ENCODE measurements at regions of chr5 and their contacts with region 1.

Region 1: DNA sequence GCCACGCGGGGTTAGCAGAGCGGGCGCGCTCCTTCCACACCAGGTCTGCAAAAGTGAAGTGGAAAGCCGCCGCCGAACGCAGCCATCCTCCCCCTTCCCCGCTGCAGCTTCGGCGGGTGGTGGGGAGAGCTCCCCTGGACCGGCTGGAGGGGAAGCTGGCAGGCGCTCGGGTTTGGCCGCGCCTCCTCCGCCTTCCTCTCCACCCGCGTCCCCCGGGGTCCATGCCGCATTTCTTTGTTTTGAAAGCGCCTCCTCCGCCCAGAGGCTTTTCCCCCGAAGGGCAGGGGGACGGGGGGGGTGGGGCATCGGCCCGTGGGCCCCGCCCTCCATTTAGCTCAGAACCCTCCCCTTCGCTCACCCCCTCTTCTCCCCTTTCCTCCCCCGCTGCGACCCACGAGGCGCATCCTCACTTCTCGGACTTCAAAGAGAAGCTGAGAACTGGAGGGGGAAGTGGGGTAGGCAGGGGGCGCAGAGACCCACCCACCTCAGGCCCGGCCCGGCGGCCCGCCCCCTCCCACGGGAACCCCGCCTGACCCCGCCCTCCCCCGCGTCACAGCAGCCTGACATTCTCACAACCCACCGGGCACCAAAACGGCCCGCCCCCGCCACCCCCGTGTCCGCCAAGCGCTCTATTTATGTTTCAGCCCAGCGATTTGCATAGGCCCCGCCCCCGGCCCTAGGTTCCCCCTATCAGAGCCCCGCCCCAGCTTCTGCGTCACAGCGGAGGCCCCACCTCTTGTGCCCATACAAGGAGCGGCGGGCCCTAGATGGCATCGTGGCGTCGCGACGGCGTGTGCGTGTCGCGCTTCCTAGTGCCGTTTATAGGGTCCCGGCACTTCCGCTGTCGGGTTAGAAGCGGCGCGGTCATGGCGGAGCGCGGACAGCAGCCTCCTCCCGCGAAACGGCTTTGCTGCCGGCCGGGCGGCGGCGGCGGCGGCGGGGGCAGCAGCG is at the start of gene ZSWIM6:
- DNase-seq: peak; percentile 99
- H3K4me3 ChIP-seq: peak within 1 kb of the TSS; percentile 94 to 99 (median 98)
- H3K27ac ChIP-seq: peak within 1 kb of the TSS; percentile 94 to 99 (median 97)
- H3K4me1 ChIP-seq: peaks cover 19 to 55% (median 32%) of the 10 kb centered on the region in 3 donors
- H3K27me3 ChIP-seq: no peaks in the 10 kb centered on the region
- CTCF ChIP-seq: no peak
- POLR2A ChIP-seq: peak in 3 of 4 donors; percentile 91 to 97 (median 96)
- total RNA-seq, gene ZSWIM6: 6.4 to 12.4 (median 8.8) TPM

Region 2: DNA sequence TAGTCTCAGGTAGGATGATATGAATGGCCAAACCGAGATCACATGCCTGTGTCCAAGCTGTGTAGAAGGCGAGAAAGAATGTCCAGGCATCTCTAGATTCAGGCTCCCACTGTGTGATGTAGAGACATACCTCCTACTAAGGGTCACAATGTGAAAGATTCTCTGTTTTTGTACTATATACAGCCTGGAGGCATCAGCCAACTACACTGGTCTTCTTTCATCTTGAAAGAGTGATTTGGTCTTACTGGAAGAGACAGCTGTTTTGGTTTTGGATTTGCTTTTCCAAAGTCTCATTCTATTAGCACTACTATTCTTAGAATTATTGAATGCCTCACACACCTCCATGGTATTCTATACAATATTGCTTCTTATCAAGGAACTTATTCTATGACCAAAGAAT is 413.2 kb before region 1 on chr5:
- intact Hi-C with region 1: no loop called
- DNase-seq: no peak
- H3K4me3 ChIP-seq: no peak overlapping the region
- H3K27ac ChIP-seq: no peak overlapping the region
- H3K4me1 ChIP-seq: no peaks in the 10 kb centered on the region
- H3K27me3 ChIP-seq: no peaks in the 10 kb centered on the region
- CTCF ChIP-seq: no peak
- POLR2A ChIP-seq: no peak

Region 3: DNA sequence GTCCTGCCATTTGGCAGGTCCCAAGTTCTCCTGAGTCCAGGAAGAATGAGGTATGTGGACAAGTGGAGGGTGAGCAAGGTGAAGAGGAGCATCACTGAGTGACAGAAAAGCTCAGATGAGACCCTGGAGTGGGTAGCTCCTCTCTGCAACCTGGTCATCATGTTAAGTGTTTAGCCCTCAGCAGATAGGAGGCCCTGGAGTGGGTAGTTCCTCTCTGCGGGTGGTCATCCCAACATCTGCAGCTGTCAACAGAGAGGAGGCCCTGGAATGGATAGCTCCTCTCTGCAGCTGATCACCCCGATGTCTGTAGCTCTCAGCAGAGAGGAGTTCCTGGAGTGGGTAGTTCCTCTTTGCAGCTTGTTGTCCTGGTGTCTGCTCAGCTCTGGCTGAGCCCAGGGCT is 338.3 kb before region 1 on chr5:
- intact Hi-C with region 1: no loop called
- DNase-seq: no peak
- H3K4me3 ChIP-seq: no peak overlapping the region
- H3K27ac ChIP-seq: no peak overlapping the region
- H3K4me1 ChIP-seq: no peaks in the 10 kb centered on the region
- H3K27me3 ChIP-seq: no peaks in the 10 kb centered on the region
- CTCF ChIP-seq: no peak
- POLR2A ChIP-seq: no peak

Region 4: DNA sequence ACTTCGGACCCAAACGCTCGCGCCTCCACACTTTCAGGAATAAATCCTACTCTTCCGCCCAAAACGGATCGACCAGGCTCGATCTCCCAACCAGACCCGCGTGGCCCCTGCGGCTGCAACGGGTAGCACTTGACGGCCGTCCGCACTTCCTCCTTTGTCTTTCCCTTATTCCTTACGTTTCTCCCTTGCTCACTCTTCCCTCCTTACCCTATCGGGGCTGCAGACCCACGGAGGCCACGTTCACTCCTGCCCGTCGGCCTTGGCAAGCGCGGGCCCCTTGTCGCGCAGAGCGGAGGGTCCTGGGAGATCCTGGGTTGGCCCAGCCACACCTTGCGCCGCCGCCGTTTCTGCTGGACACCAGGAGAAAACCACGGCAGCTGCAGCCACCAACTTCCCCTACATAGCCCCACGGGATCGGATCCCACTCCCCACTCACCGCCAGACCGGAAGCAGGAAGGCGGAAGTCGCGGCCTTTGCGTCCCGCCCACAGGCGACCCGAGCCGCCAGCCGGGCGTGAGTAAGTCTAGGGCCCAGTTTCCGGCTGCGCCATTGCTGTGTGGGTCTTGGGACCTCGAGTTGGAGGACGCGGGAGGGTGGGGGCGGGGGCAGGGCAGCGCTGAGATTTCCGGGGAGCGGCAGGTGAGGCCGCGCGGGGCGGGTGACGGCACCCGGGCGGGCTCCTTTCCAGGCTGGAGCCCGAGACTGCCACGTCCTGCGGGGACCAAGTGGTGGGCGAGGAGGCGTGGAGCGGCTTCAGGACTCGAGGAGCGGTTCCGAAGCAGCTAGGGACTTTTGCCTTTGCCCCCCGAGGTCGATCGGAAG is 169.5 kb before region 1 on chr5 and contains the start of gene SMIM15:
- intact Hi-C with region 1: loop called (anchors 5 kb)
- DNase-seq: peak; percentile 43
- H3K4me3 ChIP-seq: peak within 1 kb of the TSS; percentile 82 to 93 (median 89)
- H3K27ac ChIP-seq: peak within 1 kb of the TSS; percentile 95 to 97 (median 96)
- H3K4me1 ChIP-seq: peaks cover 4 to 58% (median 13%) of the 10 kb centered on the region in 3 donors
- H3K27me3 ChIP-seq: no peaks in the 10 kb centered on the region
- CTCF ChIP-seq: peak in 1 of 6 experiments; percentile 14
- POLR2A ChIP-seq: peak in 3 of 4 donors; percentile 10 to 73 (median 36)
- total RNA-seq, gene SMIM15: 33.6 to 48.0 (median 41.5) TPM

Region 5: DNA sequence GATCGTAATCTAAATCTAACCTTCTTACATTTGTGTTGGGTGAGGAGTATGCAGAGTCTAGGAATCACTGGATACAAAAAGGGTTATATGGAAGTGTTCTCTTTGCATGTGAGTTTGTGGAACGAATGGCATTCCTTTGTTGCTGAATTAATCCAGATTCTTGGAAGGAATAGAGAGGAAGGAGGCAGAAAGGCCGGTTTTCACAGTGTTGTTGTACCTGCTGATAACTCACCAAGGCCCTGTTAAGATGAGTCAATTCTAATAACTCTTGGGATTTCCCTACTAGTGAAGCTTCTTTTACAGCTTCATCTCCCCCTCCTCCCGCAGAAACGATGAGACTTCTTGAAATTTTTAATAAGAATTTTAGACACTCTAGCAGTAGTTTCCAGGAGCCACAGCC is 84.3 kb after region 1 on chr5:
- intact Hi-C with region 1: loop called (anchors 10 kb)
- DNase-seq: no peak
- H3K4me3 ChIP-seq: no peak overlapping the region
- H3K27ac ChIP-seq: no peak overlapping the region
- H3K4me1 ChIP-seq: peaks cover 0 to 40% (median 11%) of the 10 kb centered on the region in 3 donors
- H3K27me3 ChIP-seq: no peaks in the 10 kb centered on the region
- CTCF ChIP-seq: no peak
- POLR2A ChIP-seq: no peak